Posterior vena cava (tissue), 2 donors: ENCODE measurements at regions of chr4 and their contacts with region 1.

Region 1: GRCh38 chr4:38675146-38676121 is 11.4 kb downstream of the KLF3 start:
- DNase-seq: no peak

Region 2: GRCh38 chr4:38190717-38191178 is 484.7 kb before region 1 on chr4:
- intact Hi-C with region 1: loop called (anchors 5 to 10 kb)
- DNase-seq: no peak

Region 3: DNA sequence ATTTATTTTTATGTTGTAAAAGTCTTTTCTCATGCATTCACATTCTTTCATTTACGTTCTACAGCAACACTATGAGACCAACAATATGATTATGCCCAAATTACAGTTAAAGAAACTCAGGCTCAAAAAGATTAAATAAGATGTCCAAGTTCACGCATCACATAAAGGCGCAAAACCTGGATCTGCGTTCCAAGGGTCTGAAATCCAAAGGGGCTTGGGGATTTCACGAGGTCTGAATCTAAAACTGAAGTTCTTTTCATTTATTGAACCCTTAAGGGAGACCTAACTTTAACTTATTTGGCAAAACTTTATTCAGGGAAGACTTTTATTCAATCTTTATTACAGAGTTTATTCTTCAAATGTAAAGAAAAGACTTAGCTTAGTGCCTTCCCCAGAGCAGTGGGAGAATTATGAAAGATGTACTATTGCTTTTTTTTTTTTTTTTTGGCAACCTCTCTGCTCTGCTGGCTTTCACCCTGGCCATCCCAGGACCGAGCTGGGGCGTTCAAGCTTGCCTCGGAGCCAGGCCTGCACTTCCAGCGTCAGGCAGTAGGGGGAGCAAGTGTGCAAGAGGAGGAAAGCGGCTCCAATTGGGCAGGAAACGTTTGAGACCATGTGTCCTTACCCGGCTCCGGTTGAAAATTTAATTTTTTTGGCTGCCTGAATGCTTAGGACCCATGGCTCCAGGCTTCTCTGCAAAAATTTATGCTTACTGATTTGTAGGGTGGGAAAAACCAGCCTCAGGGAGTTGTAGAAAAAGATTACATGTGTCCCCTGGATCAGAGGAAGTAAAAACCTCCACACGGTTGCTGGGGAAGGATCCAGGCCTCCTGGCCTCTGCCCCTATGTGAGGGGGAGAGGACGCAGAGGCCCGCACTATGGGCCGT is 355.7 kb before region 1 on chr4:
- intact Hi-C with region 1: loop called (anchors 5 kb)
- DNase-seq: peak; percentile 98

Region 4: DNA sequence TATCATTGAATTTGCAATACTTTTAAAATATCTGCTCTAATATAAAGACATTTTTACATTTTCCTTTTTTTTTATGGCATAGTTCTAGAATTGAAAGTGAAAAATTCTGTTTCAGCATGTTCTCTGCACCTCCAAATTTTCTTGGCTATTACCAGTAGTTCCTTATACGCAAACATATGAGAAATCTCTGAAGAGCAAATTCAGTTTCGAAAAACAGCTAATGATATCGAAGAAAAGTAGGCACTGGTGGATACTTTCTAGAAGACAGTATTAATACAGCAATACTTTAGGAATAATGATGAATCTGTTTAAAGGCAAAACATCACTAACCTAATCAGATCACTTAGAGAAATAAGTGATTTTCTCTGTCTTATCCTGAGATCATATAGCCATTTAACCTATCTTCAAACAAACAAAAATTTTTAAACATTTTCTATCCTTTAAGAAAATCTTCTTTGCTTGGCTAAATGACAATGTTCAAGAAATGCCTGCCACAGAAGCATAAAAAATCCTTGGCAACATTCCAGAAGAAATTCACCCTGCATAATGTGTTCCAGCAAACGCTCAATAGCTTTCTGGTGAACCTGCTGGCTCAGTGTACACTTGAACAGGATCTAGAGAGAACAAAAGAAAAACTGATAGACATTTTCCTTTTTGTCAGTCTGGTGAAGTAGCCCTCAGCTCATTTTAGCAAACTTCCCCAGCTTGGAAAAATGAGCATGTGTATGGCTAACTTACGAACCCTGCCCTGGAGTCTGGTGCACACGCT is 62.6 kb before region 1 on chr4:
- intact Hi-C with region 1: no loop called
- DNase-seq: no peak